Activated CD8-positive, alpha-beta memory T cell treated with anti-CD3 and anti-CD28 coated beads, Interleukin-2, amount 10 ng/mL, durations not matched to agents 7 days and 5 days (primary cell): ENCODE measurements at regions of chr15 and their contacts with region 1.

Region 1: DNA sequence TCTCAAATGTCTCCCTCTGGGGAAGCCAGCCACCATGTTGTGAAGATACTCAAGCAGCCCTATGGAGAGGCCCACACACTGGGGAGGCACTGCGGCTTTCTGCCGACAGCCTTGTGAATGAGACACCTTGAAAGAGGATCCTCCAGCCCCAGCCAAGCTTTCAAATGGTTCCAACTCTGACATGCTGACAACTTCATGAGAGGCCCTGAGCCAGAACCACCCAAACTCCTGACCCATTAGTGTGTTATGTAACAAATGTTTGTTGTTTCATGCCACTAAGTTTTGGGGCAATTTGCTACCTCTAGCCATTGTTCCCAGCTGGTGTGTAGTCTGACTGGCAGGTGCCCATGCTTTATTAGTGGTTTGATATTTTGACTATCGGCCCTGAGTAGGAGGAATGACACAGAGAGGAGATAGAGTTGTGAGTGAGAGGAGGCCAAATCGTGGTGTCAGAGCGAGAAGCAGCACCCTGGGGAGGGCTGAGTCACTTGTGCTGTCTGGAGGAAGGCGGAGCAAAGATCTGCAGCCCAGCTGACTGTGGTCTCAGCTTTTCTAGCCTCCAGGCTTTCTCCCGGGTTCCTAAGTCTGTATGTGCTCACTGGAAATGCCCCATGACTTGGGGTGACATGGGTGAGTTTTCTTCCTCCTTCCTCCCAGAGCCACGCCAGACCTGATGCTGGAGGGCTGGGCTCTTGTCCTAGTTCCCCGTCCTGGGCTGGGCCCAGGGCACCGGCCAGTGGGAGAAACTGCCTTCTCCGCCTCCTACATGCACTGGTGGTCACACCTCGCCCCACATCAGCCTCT is 56.7 kb upstream of the BLM start:
- DNase-seq: peak; percentile 91
- ATAC-seq: peak; percentile 82
- H3K4me3 Mint-ChIP-seq: peak overlapping the region; percentile 72
- H3K27ac Mint-ChIP-seq: peak overlapping the region; percentile 88
- H3K4me1 Mint-ChIP-seq: peaks cover 86% of the 10 kb centered on the region
- H3K27me3 Mint-ChIP-seq: peaks cover 9% of the 10 kb centered on the region

Region 2: GRCh38 chr15:90571063-90571541 is 89.3 kb before region 1 on chr15:
- CTCF ChIA-PET with region 1: no interaction called
- DNase-seq: no peak
- ATAC-seq: peak; percentile 20
- H3K4me3 Mint-ChIP-seq: peak overlapping the region; percentile 28
- H3K27ac Mint-ChIP-seq: peak overlapping the region; percentile 73
- H3K4me1 Mint-ChIP-seq: peaks cover 79% of the 10 kb centered on the region
- H3K27me3 Mint-ChIP-seq: no peaks in the 10 kb centered on the region

Region 3: GRCh38 chr15:90691982-90692773 is 31.8 kb after region 1 on chr15:
- CTCF ChIA-PET with region 1: interaction called, 10 read pairs
- DNase-seq: no peak
- ATAC-seq: no peak
- H3K4me3 Mint-ChIP-seq: no peak overlapping the region
- H3K27ac Mint-ChIP-seq: peak overlapping the region; percentile 30
- H3K4me1 Mint-ChIP-seq: peaks cover 60% of the 10 kb centered on the region
- H3K27me3 Mint-ChIP-seq: no peaks in the 10 kb centered on the region